ENCODE measurements at regions of chr3 and their contacts with region 1.

Region 1: GRCh38 chr3:120417272-120417911 is 33.4 kb downstream of the FSTL1 start:
- DNase-seq: peak; percentile 78 to 83 (median 80)
- H3K4me3 ChIP-seq: peak overlapping the region; percentile 43 to 59
- H3K4me3 Mint-ChIP-seq: peak overlapping the region; percentile 82 to 94 (median 87)
- H3K27ac ChIP-seq: no peak overlapping the region
- H3K27ac Mint-ChIP-seq: peak overlapping the region in 5 of 7 donors; percentile 23 to 86 (median 81)
- H3K4me1 ChIP-seq: peaks cover 10% of the 10 kb centered on the region
- H3K4me1 Mint-ChIP-seq: peaks cover 11 to 25% (median 12%) of the 10 kb centered on the region in 4 donors
- H3K27me3 ChIP-seq: no peaks in the 10 kb centered on the region
- H3K27me3 Mint-ChIP-seq: peaks cover 0 to 7% of the 10 kb centered on the region in 2 donors

Region 2: GRCh38 chr3:120239644-120240043 is 177.7 kb before region 1 on chr3:
- CTCF ChIA-PET with region 1: interaction called, 169 read pairs
- POLR2A ChIA-PET with region 1: interaction called, 4 read pairs
- intact Hi-C with region 1: loop called (anchors 1 kb)
- DNase-seq: no peak
- H3K4me3 ChIP-seq: no peak overlapping the region
- H3K4me3 Mint-ChIP-seq: no peak overlapping the region
- H3K27ac ChIP-seq: no peak overlapping the region
- H3K27ac Mint-ChIP-seq: no peak overlapping the region
- H3K4me1 ChIP-seq: no peaks in the 10 kb centered on the region
- H3K4me1 Mint-ChIP-seq: no peaks in the 10 kb centered on the region
- H3K27me3 ChIP-seq: peaks cover 4% of the 10 kb centered on the region
- H3K27me3 Mint-ChIP-seq: peaks cover 18 to 36% of the 10 kb centered on the region in 2 donors

Region 3: DNA sequence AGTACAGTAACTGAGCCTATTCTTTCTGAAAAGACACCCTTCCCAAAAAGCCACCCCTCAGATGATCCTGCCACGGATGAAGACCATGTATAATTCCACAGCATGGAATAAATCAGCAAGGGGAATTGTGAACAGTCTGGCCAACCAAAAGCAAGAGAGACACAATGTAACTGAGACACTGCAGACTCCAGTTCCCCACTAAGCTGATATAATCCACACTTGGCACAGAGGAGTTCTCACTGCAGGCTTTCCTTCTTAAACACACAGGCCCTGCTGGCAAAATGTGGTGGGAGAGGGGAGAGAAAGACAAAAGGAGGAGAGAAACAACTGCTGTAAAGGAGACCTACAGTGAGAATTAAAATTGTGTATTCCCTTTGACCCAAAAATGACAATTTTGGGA is 145.1 kb before region 1 on chr3:
- CTCF ChIA-PET with region 1: interaction called, 13 read pairs
- POLR2A ChIA-PET with region 1: no interaction called
- intact Hi-C with region 1: no loop called
- DNase-seq: no peak
- H3K4me3 ChIP-seq: no peak overlapping the region
- H3K4me3 Mint-ChIP-seq: no peak overlapping the region
- H3K27ac ChIP-seq: no peak overlapping the region
- H3K27ac Mint-ChIP-seq: no peak overlapping the region
- H3K4me1 ChIP-seq: no peaks in the 10 kb centered on the region
- H3K4me1 Mint-ChIP-seq: no peaks in the 10 kb centered on the region
- H3K27me3 ChIP-seq: no peaks in the 10 kb centered on the region
- H3K27me3 Mint-ChIP-seq: peaks cover 12 to 15% of the 10 kb centered on the region in 2 donors

Region 4: DNA sequence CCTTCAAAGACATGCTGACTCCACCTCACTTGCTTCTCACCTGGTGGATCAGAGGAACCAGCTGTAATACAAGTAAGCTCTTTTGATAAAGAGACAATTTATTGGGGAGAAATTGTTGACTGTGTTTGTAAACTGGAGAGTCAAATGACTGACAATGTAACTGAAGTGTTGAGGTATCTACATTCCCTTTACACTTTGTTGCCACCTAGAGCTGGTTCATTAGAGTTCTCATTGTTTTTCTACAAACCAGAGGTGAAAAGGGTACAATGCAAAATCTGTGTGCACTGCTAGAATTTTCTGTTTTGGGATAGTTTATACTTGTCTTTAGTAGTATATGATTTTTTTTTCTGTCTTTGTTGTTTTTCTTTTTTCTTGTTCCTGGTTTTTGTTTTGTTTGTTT is 59.6 kb before region 1 on chr3:
- CTCF ChIA-PET with region 1: interaction called, 11 read pairs
- POLR2A ChIA-PET with region 1: no interaction called
- intact Hi-C with region 1: no loop called
- DNase-seq: no peak
- H3K4me3 ChIP-seq: no peak overlapping the region
- H3K4me3 Mint-ChIP-seq: no peak overlapping the region
- H3K27ac ChIP-seq: no peak overlapping the region
- H3K27ac Mint-ChIP-seq: peak overlapping the region in 1 of 7 donors; percentile 30
- H3K4me1 ChIP-seq: no peaks in the 10 kb centered on the region
- H3K4me1 Mint-ChIP-seq: no peaks in the 10 kb centered on the region
- H3K27me3 ChIP-seq: no peaks in the 10 kb centered on the region
- H3K27me3 Mint-ChIP-seq: peaks cover 2 to 13% of the 10 kb centered on the region in 2 donors

Region 5: GRCh38 chr3:120404876-120405275 is 12.5 kb before region 1 on chr3:
- CTCF ChIA-PET with region 1: interaction called, 36 read pairs
- POLR2A ChIA-PET with region 1: no interaction called
- intact Hi-C with region 1: no loop called
- DNase-seq: no peak
- H3K4me3 ChIP-seq: no peak overlapping the region
- H3K4me3 Mint-ChIP-seq: no peak overlapping the region
- H3K27ac ChIP-seq: no peak overlapping the region
- H3K27ac Mint-ChIP-seq: no peak overlapping the region
- H3K4me1 ChIP-seq: no peaks in the 10 kb centered on the region
- H3K4me1 Mint-ChIP-seq: no peaks in the 10 kb centered on the region
- H3K27me3 ChIP-seq: no peaks in the 10 kb centered on the region
- H3K27me3 Mint-ChIP-seq: peaks cover 2 to 3% of the 10 kb centered on the region in 2 donors

Region 6: DNA sequence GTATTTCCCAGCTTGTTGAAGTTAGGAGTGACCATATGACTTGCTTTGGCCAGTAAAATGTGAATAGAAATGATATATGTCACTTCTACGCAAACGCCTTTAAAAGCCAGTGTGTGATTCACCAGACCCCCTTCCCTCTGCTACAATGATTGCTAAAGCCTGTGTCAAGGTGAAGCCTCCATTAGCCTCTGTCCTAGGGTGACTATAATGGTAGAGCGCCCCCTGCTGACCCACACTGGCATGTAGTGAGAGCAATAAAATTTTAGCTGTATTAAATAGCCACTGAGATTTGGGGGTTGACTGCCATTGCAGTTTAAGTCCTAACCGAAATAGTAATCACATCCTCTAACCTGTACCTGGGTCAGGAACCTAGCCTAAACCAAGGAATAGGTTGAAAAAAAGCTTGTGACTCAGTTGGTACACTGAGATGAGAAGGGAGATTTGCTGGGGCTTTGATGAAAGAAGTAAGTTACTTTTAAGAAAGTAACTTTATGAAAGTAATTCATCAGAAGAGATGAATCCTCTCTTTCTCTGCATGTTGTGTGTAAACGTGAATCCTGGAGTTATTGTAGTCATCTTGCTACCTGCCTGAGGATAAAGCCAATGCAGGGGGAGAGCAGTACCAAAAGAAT is 377.7 kb after region 1 on chr3:
- CTCF ChIA-PET with region 1: interaction called, 9 read pairs
- POLR2A ChIA-PET with region 1: no interaction called
- intact Hi-C with region 1: loop called (anchors 1 kb)
- DNase-seq: peak; percentile 75 to 80 (median 76)
- H3K4me3 ChIP-seq: no peak overlapping the region
- H3K4me3 Mint-ChIP-seq: no peak overlapping the region
- H3K27ac ChIP-seq: no peak overlapping the region
- H3K27ac Mint-ChIP-seq: no peak overlapping the region
- H3K4me1 ChIP-seq: no peaks in the 10 kb centered on the region
- H3K4me1 Mint-ChIP-seq: peaks cover 0 to 12% (median 4%) of the 10 kb centered on the region in 4 donors
- H3K27me3 ChIP-seq: no peaks in the 10 kb centered on the region
- H3K27me3 Mint-ChIP-seq: peaks cover 0 to 2% of the 10 kb centered on the region in 2 donors

Measured in CD4-positive, alpha-beta memory T cell (primary cell).